Mucosa of descending colon (tissue), 3 donors: ENCODE measurements at regions of chr2 and their contacts with region 1.

Region 1: GRCh38 chr2:27095745-27096651 is 9.4 kb downstream of the KHK start:
- DNase-seq: peak; percentile 58 to 75 (median 60)
- ATAC-seq: peak; percentile 71
- H3K4me3 ChIP-seq: no peak overlapping the region
- H3K4me1 ChIP-seq: peaks cover 10% of the 10 kb centered on the region
- CTCF ChIP-seq: no peak

Region 2: DNA sequence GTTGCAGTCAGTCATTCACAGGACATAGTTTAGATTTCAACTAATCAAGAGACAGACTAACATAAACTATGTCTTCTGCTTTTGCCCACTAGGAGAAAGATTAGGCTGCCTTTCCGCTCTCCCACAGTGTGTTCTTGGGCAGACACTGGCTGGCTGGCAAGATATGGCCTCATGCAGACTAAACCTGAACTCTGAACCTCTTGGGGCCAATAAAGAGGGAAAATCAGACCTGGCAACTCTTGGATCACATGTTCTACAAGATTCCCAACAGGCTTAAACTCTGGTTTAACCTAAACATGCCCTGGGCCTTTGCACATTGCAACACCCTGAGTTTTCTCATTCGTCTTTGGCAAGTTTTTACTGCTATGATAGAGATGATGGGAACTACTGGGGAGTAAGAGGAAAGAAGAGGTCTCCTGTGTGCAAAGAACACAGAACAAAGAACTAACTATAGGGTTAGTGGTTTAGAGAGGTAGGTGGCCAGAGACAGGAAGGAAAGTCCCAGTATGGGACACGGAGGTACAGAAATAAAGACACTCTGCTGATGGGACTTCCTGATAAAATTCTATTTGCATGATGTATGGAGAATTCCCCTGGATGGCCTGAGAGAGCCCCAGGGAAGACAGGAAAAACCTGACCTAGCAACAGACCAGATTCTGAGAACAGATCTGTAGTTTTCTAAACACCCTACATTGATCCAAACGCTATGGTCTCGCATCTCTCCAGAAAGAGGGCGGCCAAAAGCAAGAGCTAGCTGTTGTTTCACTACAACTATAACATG is 113.8 kb after region 1 on chr2:
- intact Hi-C with region 1: loop called (anchors 10 kb)
- DNase-seq: peak in 2 of 3 donors; percentile 35 to 37
- ATAC-seq: peak; percentile 17
- H3K4me3 ChIP-seq: no peak overlapping the region
- H3K4me1 ChIP-seq: peaks cover 27% of the 10 kb centered on the region
- CTCF ChIP-seq: no peak

Region 3: DNA sequence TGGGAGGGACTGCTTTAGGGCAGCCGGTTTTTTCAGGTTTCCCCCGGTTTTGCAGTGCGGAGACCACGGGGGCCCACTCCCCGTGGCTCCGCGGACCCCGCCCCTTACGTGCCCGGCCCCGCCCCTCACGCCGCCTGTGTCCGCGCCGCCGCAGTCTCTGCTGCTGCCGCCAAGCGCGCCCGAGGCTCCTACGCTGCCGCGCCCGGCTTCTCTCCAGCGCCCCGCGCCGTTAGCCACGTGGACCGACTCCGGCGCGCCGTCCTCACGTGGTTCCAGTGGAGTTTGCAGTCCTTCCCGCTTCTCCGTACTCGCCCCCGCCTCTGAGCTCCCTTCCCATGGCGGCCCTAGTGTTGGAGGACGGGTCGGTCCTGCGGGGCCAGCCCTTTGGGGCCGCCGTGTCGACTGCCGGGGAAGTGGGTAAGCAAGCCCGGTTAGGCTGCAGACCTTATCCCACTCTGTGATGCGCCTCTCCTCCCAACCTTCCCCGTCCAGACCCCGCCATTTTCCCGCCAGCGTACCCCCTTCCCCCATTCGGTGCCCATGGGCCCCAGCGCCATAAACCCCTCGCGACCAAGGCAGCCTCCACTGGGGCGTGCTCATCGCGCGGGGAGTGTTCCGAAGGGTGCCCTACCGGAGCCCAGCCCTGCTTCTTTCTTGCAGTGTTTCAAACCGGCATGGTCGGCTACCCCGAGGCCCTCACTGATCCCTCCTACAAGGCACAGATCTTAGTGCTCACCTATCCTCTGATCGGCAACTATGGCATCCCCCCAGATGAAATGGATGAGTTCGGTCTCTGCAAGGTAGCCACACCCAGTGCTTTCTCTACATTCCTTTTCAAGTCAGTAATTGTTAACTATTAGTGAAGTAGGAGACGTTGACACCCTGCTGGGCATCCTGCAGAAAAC is 121.5 kb after region 1 on chr2 and contains the start of gene CAD:
- intact Hi-C with region 1: loop called in 1 of 2 experiments (anchors 10 kb)
- DNase-seq: peak; percentile 89 to 92 (median 92)
- ATAC-seq: peak; percentile 96
- H3K4me3 ChIP-seq: peak within 1 kb of the TSS; percentile 42
- H3K4me1 ChIP-seq: peaks cover 20% of the 10 kb centered on the region
- CTCF ChIP-seq: no peak
- total RNA-seq, gene CAD: 22.7 to 29.8 (median 24.7) TPM

Region 4: GRCh38 chr2:27281855-27282559 is 186.0 kb after region 1 on chr2 and contains the start of gene TRIM54:
- intact Hi-C with region 1: loop called in 1 of 2 experiments (anchors 10 kb)
- DNase-seq: no peak
- ATAC-seq: no peak
- H3K4me3 ChIP-seq: no peak within 1 kb of the TSS
- H3K4me1 ChIP-seq: no peaks in the 10 kb centered on the region
- CTCF ChIP-seq: no peak
- total RNA-seq, gene TRIM54: 0.43 TPM in 1 of 3 donors, not detected in the others